HCT116 (cell line): ENCODE measurements at regions of chr14 and their contacts with region 1.

Region 1: DNA sequence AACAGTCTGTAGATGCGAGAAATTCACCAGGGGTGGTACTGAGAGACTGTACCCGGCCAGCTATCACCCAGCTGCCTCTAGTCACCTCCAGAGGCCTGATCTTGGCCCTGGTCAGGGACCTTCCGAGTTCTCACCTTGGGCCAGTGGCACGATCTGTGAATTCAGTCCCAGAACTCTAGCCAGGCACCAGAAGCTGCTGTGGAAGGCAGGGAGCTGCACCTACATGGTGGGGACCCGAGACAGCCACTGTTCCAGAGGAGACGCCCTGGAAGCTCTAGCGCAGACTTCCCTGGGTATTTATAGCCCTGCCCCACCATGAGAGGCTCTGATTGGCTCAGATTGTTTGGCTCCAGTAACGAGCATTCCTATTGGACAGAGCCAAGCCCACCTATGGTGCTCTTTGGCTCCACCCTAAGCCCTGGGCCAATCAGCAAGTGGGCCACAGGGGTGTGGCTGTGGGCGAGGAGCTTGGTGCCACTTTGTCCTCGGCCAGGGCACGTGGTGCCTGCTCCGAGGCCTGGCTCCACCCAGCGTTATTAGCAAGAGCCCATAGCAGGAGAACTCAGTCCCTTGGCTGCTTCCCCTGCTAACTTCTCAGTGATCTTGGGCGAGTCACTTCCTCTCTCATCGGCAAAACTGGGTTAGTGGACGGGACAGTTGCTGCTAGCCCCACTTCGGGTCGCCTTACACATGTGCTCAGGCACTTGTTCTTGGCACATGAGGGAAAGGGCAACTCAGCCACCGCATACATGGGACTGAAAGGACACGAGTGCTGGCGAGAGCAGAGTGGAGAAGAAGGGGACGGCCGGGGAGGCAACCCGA is 89.0 kb upstream of the BCL11B start:
- DNase-seq: peak; percentile 67
- ATAC-seq: peak; percentile 86
- H3K4me3 ChIP-seq: peak overlapping the region; percentile 45
- H3K27ac ChIP-seq: no peak overlapping the region; the same call in 1 of the 2 replicates
- H3K4me1 ChIP-seq: peaks cover 0 to 11% of the 10 kb centered on the region in 2 experiments; a peak in 1 of 4 replicates
- H3K27me3 ChIP-seq: no peaks in the 10 kb centered on the region
- CTCF ChIP-seq: no peak
- POLR2A ChIP-seq: peak; percentile 24
- RAD21 ChIP-seq: no peak

Region 2: GRCh38 chr14:99333841-99334635 is 26.9 kb before region 1 on chr14:
- CTCF ChIA-PET with region 1: no interaction called
- POLR2A ChIA-PET with region 1: interaction called, 10 read pairs
- RAD21 ChIA-PET with region 1: no interaction called
- intact Hi-C with region 1: no loop called
- DNase-seq: no peak
- ATAC-seq: no peak
- H3K4me3 ChIP-seq: no peak overlapping the region
- H3K27ac ChIP-seq: no peak overlapping the region
- H3K4me1 ChIP-seq: no peaks in the 10 kb centered on the region
- H3K27me3 ChIP-seq: peaks cover 26% of the 10 kb centered on the region
- CTCF ChIP-seq: no peak
- POLR2A ChIP-seq: no peak
- RAD21 ChIP-seq: no peak

Region 3: GRCh38 chr14:99930420-99931274 is 569.7 kb after region 1 on chr14:
- CTCF ChIA-PET with region 1: no interaction called
- POLR2A ChIA-PET with region 1: no interaction called
- RAD21 ChIA-PET with region 1: no interaction called
- intact Hi-C with region 1: no loop called
- DNase-seq: no peak
- ATAC-seq: no peak
- H3K4me3 ChIP-seq: no peak overlapping the region
- H3K27ac ChIP-seq: no peak overlapping the region
- H3K4me1 ChIP-seq: no peaks in the 10 kb centered on the region
- H3K27me3 ChIP-seq: no peaks in the 10 kb centered on the region
- CTCF ChIP-seq: no peak
- POLR2A ChIP-seq: no peak
- RAD21 ChIP-seq: no peak